Activated naive CD4-positive, alpha-beta T cell treated with anti-CD3 and anti-CD28 coated beads for 36 hours (primary cell): ENCODE measurements at regions of chr13 and their contacts with region 1.

Region 1: DNA sequence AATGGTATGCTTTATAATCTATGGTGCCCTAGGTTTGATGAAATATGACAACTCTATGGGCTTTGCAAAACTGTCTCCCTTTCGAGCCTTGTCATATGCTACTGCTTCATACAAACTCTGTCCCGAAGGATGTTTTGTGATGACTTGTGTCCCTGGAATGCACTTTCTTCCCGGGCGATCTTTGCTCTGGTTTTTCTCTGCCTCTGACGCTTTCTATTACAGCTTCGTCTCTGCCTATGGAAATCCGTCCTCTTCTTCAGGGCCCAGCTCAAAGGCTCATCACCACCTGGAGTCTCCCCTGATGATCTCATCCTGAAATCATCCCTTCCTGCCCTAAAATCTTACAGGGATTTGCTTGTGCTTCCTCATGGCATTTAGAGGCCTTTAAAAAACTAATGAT is 191.6 kb upstream of the KL start:
- DNase-seq: no peak
- H3K4me3 Mint-ChIP-seq: no peak overlapping the region
- H3K27ac Mint-ChIP-seq: no peak overlapping the region
- H3K4me1 Mint-ChIP-seq: no peaks in the 10 kb centered on the region
- H3K27me3 Mint-ChIP-seq: no peaks in the 10 kb centered on the region

Region 2: DNA sequence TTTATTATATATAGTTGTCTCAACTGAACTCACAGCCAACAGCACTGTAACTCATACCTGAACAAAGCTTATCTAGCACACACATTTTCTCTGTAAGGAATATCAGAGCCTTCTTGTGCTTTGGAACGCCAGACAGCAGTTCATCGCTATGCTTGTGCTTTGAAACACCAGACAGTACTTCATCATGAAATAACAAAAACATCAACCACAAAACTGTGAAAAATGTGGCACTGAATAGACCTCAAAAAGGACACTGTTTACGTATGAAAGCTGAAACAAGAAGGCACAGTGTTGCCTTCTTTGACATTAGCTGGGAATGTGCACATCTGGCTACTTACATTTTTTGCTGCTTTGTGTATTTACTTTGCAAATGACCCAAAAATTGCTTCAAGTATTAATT is 78.2 kb before region 1 on chr13:
- CTCF ChIA-PET with region 1: no interaction called
- intact Hi-C with region 1: loop called (anchors 5 kb)
- DNase-seq: no peak
- H3K4me3 Mint-ChIP-seq: no peak overlapping the region
- H3K27ac Mint-ChIP-seq: no peak overlapping the region
- H3K4me1 Mint-ChIP-seq: no peaks in the 10 kb centered on the region
- H3K27me3 Mint-ChIP-seq: no peaks in the 10 kb centered on the region

Region 3: DNA sequence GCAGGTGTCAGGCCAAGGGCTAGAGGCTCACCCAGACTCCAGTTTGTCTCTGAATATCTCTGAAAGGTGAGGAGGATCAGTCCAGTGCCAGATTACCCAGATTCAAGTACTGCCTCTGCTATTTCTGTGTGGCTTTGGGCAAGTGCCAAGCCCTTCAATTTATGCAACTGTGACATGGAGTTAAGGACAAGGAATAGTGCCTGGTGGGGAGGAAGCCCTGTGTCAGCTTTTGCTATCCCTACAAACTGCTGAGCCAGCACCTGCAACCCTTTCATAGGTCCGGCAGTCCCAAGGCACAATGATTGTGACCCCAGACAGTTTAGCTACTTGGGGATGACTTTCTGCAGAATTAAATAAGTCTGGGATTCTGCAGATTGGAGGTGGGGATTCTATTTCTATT is 314.5 kb after region 1 on chr13:
- CTCF ChIA-PET with region 1: no interaction called
- intact Hi-C with region 1: no loop called
- DNase-seq: no peak
- H3K4me3 Mint-ChIP-seq: no peak overlapping the region
- H3K27ac Mint-ChIP-seq: no peak overlapping the region
- H3K4me1 Mint-ChIP-seq: no peaks in the 10 kb centered on the region
- H3K27me3 Mint-ChIP-seq: peaks cover 11% of the 10 kb centered on the region